ENCODE measurements at regions of chr7 and their contacts with region 1.

Region 1: DNA sequence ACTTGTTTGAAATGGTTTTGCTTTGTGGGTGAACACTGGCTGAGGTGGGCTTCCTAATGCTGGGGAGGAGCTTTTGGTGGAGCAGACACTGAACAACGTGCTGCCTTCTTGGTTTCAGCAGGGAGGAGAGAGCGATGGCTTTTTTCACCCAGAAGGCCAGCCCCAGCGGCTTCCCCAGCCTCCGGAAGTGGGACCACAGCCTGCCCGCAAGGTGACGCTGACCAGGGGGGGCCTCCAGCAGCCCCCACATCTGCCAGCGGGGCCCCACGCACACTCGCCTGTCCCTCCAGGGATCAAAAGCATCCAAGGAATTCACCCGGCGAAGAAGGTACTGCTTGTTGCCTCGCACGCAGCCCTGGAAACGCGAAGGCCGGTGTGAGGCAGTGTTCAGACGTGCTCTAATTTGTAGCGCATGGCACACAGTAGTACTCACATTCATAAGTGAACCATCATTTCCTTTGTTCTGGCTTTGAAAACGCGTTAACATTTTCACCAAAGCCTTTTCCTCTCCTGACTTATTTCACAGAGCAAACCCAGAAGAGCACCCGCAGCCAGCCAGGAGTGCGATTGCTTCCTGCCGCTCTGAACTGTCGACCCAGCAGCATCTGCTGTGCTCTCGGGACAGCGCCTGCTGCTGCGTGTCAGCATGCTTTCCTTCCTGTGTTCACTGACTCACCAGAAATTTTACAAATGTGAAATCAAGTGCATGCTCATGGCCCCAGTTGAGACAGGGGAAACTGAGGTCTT is 48.4 kb downstream of the SHH start:
- DNase-seq: peak; percentile 40 to 68 (median 60)
- H3K4me3 ChIP-seq: peak overlapping the region in 1 of 2 donors; percentile 11
- H3K4me3 Mint-ChIP-seq: peak overlapping the region; percentile 67 to 91 (median 77)
- H3K27ac ChIP-seq: peak overlapping the region; percentile 51
- H3K27ac Mint-ChIP-seq: peak overlapping the region; percentile 87 to 96 (median 93)
- H3K4me1 ChIP-seq: peaks cover 36% of the 10 kb centered on the region
- H3K4me1 Mint-ChIP-seq: peaks cover 33 to 66% (median 48%) of the 10 kb centered on the region in 4 donors
- H3K27me3 ChIP-seq: no peaks in the 10 kb centered on the region
- H3K27me3 Mint-ChIP-seq: no peaks in the 10 kb centered on the region

Region 2: DNA sequence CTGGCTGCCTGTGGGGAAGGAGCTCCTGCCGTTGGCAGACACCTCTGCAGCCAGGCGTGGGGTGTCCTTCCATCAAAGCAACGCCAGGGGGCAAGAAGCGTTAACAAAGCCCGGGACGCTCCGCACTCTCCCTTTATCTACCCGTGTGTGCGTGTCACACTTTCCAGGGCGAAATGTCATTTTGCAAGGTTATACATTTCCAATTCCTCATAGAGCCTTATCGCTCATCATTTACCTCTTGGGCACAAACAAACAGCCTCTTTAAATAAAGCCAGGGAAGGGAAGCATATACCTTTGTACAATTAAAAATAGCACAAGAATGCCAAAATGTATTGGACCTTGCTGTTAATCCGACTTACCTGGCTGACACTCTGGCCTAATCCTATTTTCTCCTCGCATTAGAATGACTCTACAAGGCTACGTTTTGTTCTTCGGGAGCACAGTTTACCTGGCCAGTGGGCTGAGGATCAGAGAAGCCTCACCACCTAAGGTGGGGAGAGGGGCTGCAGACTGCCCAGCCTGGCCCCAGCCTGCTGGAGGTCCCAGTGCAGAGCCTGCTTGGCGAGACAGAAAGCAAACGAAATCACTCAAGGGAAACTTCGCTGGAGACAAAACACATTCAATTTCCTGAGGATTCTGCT is 383.5 kb before region 1 on chr7:
- CTCF ChIA-PET with region 1: no interaction called
- POLR2A ChIA-PET with region 1: no interaction called
- intact Hi-C with region 1: loop called (anchors 1 kb)
- DNase-seq: peak; percentile 41 to 68 (median 47)
- H3K4me3 ChIP-seq: no peak overlapping the region
- H3K4me3 Mint-ChIP-seq: peak overlapping the region in 4 of 8 donors; percentile 41 to 73 (median 48)
- H3K27ac ChIP-seq: no peak overlapping the region
- H3K27ac Mint-ChIP-seq: no peak overlapping the region
- H3K4me1 ChIP-seq: peaks cover 30% of the 10 kb centered on the region
- H3K4me1 Mint-ChIP-seq: peaks cover 19 to 41% (median 29%) of the 10 kb centered on the region in 4 donors
- H3K27me3 ChIP-seq: peaks cover 54% of the 10 kb centered on the region
- H3K27me3 Mint-ChIP-seq: peaks cover 65 to 77% of the 10 kb centered on the region in 2 donors

Region 3: DNA sequence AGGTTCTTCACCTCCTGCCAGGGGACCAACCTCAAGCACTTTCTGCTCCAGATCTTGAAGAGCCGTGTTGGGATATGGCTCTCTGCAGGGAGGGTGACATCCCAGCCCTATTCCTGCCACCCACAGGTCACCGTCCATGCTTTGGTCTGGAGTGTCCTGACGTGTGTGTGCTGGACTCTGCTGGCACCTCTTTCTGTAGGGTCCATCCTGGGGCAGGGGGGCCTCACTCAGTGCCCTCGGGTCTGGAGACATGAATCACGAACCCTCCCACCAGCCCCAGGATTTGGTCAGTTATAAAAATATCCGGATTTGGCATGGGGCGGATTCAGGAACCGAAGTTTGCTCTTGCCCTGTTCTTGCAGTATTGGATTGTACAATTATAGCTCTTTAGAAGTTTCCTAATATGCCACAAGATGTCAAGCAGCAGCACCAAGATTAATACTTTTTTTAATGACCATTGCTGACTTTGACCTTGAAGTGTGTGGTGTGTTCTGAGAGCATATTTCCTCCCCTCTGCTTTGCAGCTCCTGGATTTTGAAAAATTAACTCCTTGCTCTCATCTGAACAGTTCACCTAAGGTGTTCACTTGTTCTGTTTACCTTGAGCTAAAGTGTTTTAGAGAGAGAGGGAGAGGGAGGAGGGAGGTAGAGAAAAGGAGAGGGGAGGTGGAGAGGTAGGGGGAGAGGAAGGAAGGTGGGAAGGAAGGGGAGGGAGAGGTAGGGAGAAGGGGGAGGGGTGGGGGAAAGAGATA is 143.8 kb after region 1 on chr7:
- CTCF ChIA-PET with region 1: no interaction called
- POLR2A ChIA-PET with region 1: no interaction called
- intact Hi-C with region 1: no loop called
- DNase-seq: no peak
- H3K4me3 ChIP-seq: no peak overlapping the region
- H3K4me3 Mint-ChIP-seq: no peak overlapping the region
- H3K27ac ChIP-seq: no peak overlapping the region
- H3K27ac Mint-ChIP-seq: no peak overlapping the region
- H3K4me1 ChIP-seq: no peaks in the 10 kb centered on the region
- H3K4me1 Mint-ChIP-seq: no peaks in the 10 kb centered on the region
- H3K27me3 ChIP-seq: no peaks in the 10 kb centered on the region
- H3K27me3 Mint-ChIP-seq: peaks cover 0 to 2% of the 10 kb centered on the region in 2 donors